CD4-positive, alpha-beta memory T cell (primary cell): ENCODE measurements at regions of chr11 and their contacts with region 1.

Region 1: DNA sequence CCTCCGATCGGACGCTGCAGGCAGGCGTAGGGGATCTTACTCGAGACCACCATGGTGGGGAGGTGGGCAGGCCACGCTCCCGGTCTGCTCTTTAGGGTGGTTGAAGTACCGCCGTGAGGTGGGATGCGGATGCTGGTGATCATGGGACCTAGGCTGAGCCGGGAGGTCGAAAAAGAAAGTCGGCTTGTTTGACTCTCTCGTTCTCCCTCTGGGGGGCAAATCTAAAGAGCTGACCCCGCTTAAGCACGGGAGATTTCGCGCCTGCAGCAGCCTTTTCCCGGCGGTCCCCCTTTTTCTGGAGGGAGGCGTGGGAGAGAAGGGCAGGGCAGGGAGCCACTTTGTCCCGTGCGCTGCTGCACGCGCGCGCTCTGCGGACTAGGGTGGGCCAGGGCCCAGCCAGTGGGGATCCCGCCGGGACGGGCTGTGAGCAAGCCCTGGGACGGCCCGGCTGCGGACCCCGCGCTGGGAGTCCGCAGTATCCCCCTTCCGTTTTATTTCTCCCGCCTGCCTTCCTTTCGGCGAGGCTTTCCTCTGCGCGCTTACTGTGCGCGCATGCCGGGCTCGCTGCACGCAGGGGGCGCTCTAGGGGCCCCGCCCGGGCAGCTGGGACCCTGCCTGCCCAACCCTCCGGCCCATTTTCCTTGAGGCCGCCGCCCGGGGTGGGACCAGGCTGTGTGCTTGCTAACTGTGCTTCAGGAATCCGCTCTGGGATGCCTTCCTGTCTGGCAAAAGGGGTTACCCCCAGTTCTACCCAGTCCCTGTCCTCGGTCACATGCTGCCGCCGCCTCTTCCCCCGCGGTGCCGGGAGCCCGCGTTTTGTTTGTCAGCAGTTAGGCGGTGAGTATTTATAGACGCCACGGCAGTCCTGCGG is 81.0 kb downstream of the PRR5L start:
- DNase-seq: peak; percentile 67 to 76 (median 73)
- H3K4me3 ChIP-seq: peak overlapping the region; percentile 55 to 81
- H3K4me3 Mint-ChIP-seq: peak overlapping the region; percentile 79 to 98 (median 97)
- H3K27ac ChIP-seq: peak overlapping the region; percentile 46
- H3K27ac Mint-ChIP-seq: peak overlapping the region; percentile 81 to 96 (median 92)
- H3K4me1 ChIP-seq: peaks cover 51% of the 10 kb centered on the region
- H3K4me1 Mint-ChIP-seq: peaks cover 24 to 75% (median 50%) of the 10 kb centered on the region in 4 donors
- H3K27me3 ChIP-seq: no peaks in the 10 kb centered on the region
- H3K27me3 Mint-ChIP-seq: peaks cover 0 to 2% of the 10 kb centered on the region in 2 donors

Region 2: DNA sequence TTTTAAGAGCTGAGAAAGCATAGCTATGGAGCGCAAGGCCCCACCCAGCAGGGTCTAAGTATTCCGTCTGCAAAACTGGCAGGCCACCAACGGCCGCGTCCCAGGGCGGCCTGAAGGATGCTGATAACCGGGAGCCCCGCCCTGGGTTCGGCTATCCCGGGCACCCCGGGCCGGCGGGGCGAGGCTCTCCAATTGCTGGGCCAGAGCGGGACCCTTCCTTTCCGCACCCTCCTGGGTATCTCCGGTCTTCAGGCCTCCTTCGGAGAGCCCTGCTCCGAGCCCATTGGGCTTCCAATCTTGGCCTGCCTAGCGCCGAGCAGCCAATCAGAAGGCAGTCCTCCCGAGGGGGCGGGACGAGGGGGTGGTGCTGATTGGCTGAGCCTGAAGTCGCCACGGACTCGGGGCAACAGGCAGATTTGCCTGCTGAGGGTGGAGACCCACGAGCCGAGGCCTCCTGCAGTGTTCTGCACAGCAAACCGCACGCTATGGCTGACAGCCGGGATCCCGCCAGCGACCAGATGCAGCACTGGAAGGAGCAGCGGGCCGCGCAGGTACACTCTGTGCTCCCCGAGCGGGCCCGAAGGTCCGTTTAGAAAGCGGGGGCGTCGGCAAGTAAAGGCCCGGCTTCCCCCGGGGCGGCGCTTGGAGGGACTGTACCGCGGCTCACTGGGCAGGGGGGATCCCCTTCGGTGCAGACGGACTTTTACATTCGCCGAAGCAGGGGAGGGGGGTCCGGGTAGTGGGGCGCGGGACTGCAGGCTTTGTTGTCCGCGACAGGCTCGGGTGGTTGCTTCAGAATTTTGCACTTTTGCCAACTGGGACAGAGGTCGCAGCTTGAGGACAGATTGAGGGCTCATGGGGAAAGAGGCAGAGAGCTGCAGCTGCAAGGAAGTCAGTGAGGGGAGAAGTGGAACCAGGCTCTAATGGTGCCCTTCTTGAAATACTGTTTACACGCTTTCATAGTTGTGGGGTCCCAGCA is 1938.3 kb before region 1 on chr11 and contains the start of gene CAT:
- CTCF ChIA-PET with region 1: no interaction called
- POLR2A ChIA-PET with region 1: no interaction called
- intact Hi-C with region 1: loop called (anchors 5 kb)
- DNase-seq: peak; percentile 96 to 97 (median 96)
- H3K4me3 ChIP-seq: peak within 1 kb of the TSS; percentile 52 to 90
- H3K4me3 Mint-ChIP-seq: peak within 1 kb of the TSS; percentile 94 to 99 (median 98)
- H3K27ac ChIP-seq: peak within 1 kb of the TSS; percentile 75
- H3K27ac Mint-ChIP-seq: peak within 1 kb of the TSS; percentile 93 to 98 (median 95)
- H3K4me1 ChIP-seq: peaks cover 28% of the 10 kb centered on the region
- H3K4me1 Mint-ChIP-seq: peaks cover 22 to 41% (median 31%) of the 10 kb centered on the region in 4 donors
- H3K27me3 ChIP-seq: no peaks in the 10 kb centered on the region
- H3K27me3 Mint-ChIP-seq: no peaks in the 10 kb centered on the region
- total RNA-seq, gene CAT: 35.1 to 38.4 TPM

Region 3: GRCh38 chr11:35873721-35874120 is 503.4 kb before region 1 on chr11:
- CTCF ChIA-PET with region 1: no interaction called
- POLR2A ChIA-PET with region 1: no interaction called
- intact Hi-C with region 1: no loop called
- DNase-seq: no peak
- H3K4me3 ChIP-seq: no peak overlapping the region
- H3K4me3 Mint-ChIP-seq: no peak overlapping the region
- H3K27ac ChIP-seq: no peak overlapping the region
- H3K27ac Mint-ChIP-seq: no peak overlapping the region
- H3K4me1 ChIP-seq: no peaks in the 10 kb centered on the region
- H3K4me1 Mint-ChIP-seq: no peaks in the 10 kb centered on the region
- H3K27me3 ChIP-seq: peaks cover 4% of the 10 kb centered on the region
- H3K27me3 Mint-ChIP-seq: peaks cover 6 to 11% of the 10 kb centered on the region in 2 donors

Region 4: DNA sequence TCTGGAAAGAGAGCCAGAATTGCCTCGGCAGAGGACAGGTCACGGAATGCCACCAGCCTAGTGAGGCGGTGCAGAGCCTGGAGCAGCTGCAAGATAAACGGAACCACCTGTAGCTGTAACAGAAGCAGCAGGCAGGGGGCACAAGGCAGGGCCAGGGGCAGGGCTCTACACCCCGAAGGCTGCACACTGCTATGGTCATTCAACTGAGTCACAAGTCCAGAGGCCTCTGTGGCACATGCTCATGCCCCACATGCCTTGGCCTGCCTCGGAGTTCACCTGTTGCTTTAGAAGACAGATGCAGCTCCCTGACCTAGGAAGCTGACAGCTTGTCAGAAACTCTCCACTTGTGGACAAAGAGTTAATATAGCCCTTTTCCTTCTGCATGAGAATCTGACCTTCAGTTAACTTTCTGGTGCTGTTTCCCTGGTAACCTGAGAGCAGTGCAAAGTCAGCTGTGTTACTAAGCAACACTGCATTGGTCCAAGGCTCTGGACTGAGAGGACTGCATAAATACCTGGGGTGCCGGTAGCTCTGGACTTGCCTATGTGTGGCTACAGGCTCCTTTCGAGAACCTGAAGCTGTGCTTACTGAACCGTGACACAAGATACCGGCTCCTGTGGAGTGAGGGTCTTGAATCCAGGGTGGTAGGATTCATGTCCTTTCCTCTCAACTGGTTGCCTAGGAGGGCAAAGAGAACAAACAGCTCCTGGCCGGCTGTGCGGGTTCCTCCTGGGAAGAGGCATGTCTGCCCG is 98.4 kb before region 1 on chr11:
- CTCF ChIA-PET with region 1: no interaction called
- POLR2A ChIA-PET with region 1: no interaction called
- intact Hi-C with region 1: no loop called
- DNase-seq: no peak
- H3K4me3 ChIP-seq: no peak overlapping the region
- H3K4me3 Mint-ChIP-seq: no peak overlapping the region
- H3K27ac ChIP-seq: no peak overlapping the region
- H3K27ac Mint-ChIP-seq: peak overlapping the region in 1 of 7 donors; percentile 57
- H3K4me1 ChIP-seq: no peaks in the 10 kb centered on the region
- H3K4me1 Mint-ChIP-seq: peaks cover 5 to 19% (median 8%) of the 10 kb centered on the region in 4 donors
- H3K27me3 ChIP-seq: no peaks in the 10 kb centered on the region
- H3K27me3 Mint-ChIP-seq: no peaks in the 10 kb centered on the region

Region 5: DNA sequence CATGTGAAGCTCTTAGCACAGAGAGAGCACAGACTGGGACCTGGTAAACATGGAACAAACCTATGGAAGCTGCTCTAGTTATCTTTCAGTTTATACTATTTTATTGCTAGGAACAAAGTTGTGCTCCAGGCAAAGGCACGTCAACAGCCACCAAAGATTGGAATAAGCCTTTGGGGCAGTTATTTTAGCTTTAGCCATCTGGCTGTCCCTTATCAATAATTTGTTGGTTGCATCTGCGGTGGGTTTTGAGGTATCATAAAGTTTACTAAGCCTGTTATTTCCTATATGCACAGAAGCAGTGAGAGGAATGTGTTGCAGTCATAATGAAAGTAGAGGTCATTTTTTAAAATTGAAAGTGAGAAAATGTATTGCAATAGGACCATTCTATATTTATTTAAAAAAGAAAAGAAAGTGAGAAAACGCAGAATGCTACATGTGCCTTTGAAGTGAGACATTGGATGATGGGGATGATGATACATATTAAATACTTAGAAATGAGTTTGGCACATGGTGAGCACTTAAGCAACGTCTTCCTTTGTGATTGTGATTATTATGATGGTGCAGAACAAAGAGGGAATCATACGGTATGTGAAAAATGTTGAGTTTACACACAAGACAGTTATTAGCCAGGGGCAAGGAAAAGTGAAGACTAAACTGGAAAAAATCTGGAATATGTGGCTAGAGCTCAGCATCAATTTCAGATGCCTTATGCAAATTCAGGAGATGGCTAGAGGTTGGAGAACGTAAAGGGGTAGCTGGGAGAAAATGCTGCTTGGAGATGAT is 22.7 kb before region 1 on chr11:
- CTCF ChIA-PET with region 1: interaction called, 92 read pairs
- POLR2A ChIA-PET with region 1: interaction called, 62 read pairs
- intact Hi-C with region 1: loop called (anchors 1 kb)
- DNase-seq: no peak
- H3K4me3 ChIP-seq: no peak overlapping the region
- H3K4me3 Mint-ChIP-seq: peak overlapping the region in 5 of 8 donors; percentile 1 to 23 (median 14)
- H3K27ac ChIP-seq: no peak overlapping the region
- H3K27ac Mint-ChIP-seq: peak overlapping the region in 5 of 7 donors; percentile 29 to 92 (median 76)
- H3K4me1 ChIP-seq: peaks cover 64% of the 10 kb centered on the region
- H3K4me1 Mint-ChIP-seq: peaks cover 29 to 78% (median 52%) of the 10 kb centered on the region in 4 donors
- H3K27me3 ChIP-seq: no peaks in the 10 kb centered on the region
- H3K27me3 Mint-ChIP-seq: peaks cover 2% of the 10 kb centered on the region in 2 donors

Region 6: GRCh38 chr11:36398231-36398953 is 21.3 kb after region 1 on chr11:
- CTCF ChIA-PET with region 1: interaction called, 22 read pairs
- POLR2A ChIA-PET with region 1: interaction called, 13 read pairs
- intact Hi-C with region 1: no loop called
- DNase-seq: no peak
- H3K4me3 ChIP-seq: no peak overlapping the region
- H3K4me3 Mint-ChIP-seq: no peak overlapping the region
- H3K27ac ChIP-seq: no peak overlapping the region
- H3K27ac Mint-ChIP-seq: peak overlapping the region in 3 of 7 donors; percentile 21 to 37 (median 23)
- H3K4me1 ChIP-seq: peaks cover 47% of the 10 kb centered on the region
- H3K4me1 Mint-ChIP-seq: peaks cover 22 to 54% (median 39%) of the 10 kb centered on the region in 4 donors
- H3K27me3 ChIP-seq: no peaks in the 10 kb centered on the region
- H3K27me3 Mint-ChIP-seq: no peaks in the 10 kb centered on the region

Region 7: GRCh38 chr11:36421546-36422155 is 44.5 kb after region 1 on chr11:
- CTCF ChIA-PET with region 1: interaction called, 21 read pairs
- POLR2A ChIA-PET with region 1: interaction called, 87 read pairs
- intact Hi-C with region 1: loop called (anchors 5 kb)
- DNase-seq: no peak
- H3K4me3 ChIP-seq: no peak overlapping the region
- H3K4me3 Mint-ChIP-seq: peak overlapping the region in 7 of 8 donors; percentile 60 to 86 (median 68)
- H3K27ac ChIP-seq: no peak overlapping the region
- H3K27ac Mint-ChIP-seq: peak overlapping the region; percentile 77 to 93 (median 85)
- H3K4me1 ChIP-seq: peaks cover 69% of the 10 kb centered on the region
- H3K4me1 Mint-ChIP-seq: peaks cover 34 to 81% (median 62%) of the 10 kb centered on the region in 4 donors
- H3K27me3 ChIP-seq: no peaks in the 10 kb centered on the region
- H3K27me3 Mint-ChIP-seq: no peaks in the 10 kb centered on the region

Region 8: GRCh38 chr11:36450110-36450572 is 73.0 kb after region 1 on chr11:
- CTCF ChIA-PET with region 1: interaction called, 50 read pairs
- POLR2A ChIA-PET with region 1: interaction called, 51 read pairs
- intact Hi-C with region 1: loop called (anchors 1 kb)
- DNase-seq: peak in 1 of 5 donors; percentile 10
- H3K4me3 ChIP-seq: no peak overlapping the region
- H3K4me3 Mint-ChIP-seq: peak overlapping the region; percentile 24 to 83 (median 65)
- H3K27ac ChIP-seq: no peak overlapping the region
- H3K27ac Mint-ChIP-seq: peak overlapping the region; percentile 28 to 89 (median 76)
- H3K4me1 ChIP-seq: peaks cover 54% of the 10 kb centered on the region
- H3K4me1 Mint-ChIP-seq: peaks cover 45 to 68% (median 56%) of the 10 kb centered on the region in 4 donors
- H3K27me3 ChIP-seq: no peaks in the 10 kb centered on the region
- H3K27me3 Mint-ChIP-seq: no peaks in the 10 kb centered on the region

Region 9: GRCh38 chr11:36478700-36479329 is 101.7 kb after region 1 on chr11:
- CTCF ChIA-PET with region 1: interaction called, 37 read pairs
- POLR2A ChIA-PET with region 1: interaction called, 5 read pairs
- intact Hi-C with region 1: loop called (anchors 5 kb)
- DNase-seq: peak in 4 of 5 donors; percentile 34 to 43 (median 40)
- H3K4me3 ChIP-seq: no peak overlapping the region
- H3K4me3 Mint-ChIP-seq: no peak overlapping the region
- H3K27ac ChIP-seq: no peak overlapping the region
- H3K27ac Mint-ChIP-seq: peak overlapping the region in 1 of 7 donors; percentile 10
- H3K4me1 ChIP-seq: no peaks in the 10 kb centered on the region
- H3K4me1 Mint-ChIP-seq: peaks cover 3 to 8% (median 6%) of the 10 kb centered on the region in 4 donors
- H3K27me3 ChIP-seq: no peaks in the 10 kb centered on the region
- H3K27me3 Mint-ChIP-seq: no peaks in the 10 kb centered on the region